Cardiac septum (tissue), 1 donor: ENCODE measurements at regions of chr9 and their contacts with region 1.

Region 1: DNA sequence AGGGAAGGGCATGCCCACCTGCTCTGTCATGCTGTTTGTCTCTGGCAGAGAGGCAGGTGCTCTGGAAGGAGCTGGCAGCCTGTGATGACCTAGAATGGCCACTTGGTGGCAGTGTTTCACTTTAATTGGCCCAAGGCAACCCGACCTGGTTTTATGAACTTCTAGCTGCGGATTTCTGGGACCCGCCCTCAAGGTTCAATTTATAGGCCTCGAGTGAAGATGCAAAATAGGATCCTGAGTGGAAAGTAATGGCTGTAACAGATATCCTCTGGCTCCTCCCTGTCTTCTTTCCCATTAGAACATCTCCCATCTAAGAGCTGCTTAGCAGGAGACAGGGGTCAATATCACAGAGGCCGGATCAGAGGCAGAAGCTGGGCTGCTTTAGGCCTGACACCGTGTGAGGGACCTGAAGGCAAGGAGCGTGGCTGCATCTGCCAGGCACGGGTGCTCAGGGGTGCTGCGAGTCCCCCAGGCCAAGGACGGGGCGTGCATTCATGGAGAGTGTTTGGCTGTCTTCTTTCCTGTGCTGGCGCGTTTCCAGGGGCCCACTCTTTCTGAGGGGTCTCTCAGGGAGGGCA is 56.7 kb upstream of the SLC28A3 start:
- DNase-seq: peak; percentile 82

Region 2: GRCh38 chr9:84513473-84513872 is 116.2 kb after region 1 on chr9:
- intact Hi-C with region 1: no loop called
- DNase-seq: no peak

Region 3: DNA sequence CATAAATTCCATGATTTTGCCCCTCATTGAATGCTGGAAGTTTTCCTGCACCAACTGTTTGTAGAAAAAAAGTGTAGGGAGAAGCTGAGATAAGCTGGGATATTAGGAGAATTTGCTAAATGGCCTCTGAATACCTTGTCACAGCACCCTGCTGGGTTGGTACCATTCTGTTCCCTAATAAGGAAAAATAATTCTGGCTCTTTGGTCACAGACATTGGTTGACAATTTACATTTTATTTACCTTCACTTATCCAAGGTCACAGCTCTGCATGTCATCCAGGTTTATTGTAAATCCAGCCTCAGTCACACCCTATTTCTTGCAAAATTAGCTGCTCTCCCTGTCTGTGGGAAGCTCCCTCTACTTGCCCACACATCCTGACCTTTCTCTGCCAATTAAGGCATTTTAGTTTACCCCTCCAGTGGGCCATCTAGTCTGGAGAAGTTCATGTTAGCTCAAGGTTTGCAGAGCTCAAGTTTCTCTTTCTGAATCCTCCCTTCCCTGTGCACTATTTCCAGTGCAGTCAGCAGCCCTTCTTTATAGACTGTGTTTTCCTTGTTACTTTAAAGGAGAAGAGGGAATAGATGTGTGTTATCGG is 156.9 kb after region 1 on chr9:
- intact Hi-C with region 1: no loop called
- DNase-seq: no peak

Region 4: GRCh38 chr9:84953797-84954705 is 556.8 kb after region 1 on chr9:
- intact Hi-C with region 1: loop called (anchors 5 kb)
- DNase-seq: peak; percentile 86

Region 5: DNA sequence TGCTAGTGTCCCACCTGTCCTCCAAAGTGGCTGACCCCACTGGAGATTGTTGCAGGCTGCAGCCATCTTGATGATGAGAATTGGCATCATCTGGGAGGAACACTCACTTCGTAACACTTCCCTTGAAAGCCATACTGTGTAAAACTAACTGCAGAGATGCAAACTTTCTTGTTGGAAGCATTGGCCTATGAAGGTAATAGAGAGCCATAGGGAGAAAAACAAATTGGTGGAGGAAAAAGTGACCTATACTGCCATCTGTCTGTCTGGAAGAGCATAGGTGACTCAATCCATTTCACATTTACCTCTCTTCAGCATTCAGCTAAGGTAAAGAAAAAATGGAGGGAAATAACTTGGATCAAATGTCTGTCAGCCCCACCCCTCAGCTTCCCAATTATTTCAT is 745.7 kb after region 1 on chr9:
- intact Hi-C with region 1: loop called (anchors 5 kb)
- DNase-seq: no peak

Region 6: DNA sequence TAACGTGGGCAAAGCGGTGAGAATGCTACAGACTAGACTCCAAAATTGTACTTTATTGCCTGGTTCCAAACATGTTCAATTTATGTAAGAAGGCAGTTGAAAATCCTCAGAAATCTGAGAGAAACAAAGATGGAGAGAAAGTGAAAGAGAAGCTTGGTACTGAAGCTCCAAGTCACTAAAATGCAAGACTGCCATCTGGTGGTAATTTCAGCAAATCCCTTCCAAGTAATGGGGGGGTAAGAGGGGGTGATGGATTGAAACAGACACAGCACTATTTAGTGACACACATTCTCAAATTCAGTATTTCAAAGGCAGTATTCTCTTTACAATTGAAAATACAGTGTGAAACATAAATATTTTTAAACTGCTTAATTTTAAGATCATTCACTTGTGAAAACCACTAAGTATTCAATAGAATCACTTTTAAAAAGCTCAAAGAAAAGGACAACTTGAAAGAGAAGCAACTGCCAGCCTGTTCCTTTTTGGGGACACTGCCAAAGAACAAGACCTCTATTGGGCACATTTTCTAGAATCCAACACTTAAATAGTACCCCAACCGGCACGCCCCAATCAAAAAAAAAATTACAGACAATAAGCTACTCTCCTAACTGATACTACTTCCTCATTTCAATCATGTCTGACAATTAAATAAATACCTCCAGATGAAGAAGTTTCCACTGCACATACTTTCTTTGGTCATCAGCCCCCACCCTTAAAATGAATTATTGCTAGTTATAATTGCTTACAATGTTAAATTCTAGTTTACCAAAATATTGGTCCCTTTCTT is 1213.0 kb after region 1 on chr9:
- intact Hi-C with region 1: loop called (anchors 5 kb)
- DNase-seq: no peak